ENCODE measurements at regions of chr19 and their contacts with region 1.

Region 1: DNA sequence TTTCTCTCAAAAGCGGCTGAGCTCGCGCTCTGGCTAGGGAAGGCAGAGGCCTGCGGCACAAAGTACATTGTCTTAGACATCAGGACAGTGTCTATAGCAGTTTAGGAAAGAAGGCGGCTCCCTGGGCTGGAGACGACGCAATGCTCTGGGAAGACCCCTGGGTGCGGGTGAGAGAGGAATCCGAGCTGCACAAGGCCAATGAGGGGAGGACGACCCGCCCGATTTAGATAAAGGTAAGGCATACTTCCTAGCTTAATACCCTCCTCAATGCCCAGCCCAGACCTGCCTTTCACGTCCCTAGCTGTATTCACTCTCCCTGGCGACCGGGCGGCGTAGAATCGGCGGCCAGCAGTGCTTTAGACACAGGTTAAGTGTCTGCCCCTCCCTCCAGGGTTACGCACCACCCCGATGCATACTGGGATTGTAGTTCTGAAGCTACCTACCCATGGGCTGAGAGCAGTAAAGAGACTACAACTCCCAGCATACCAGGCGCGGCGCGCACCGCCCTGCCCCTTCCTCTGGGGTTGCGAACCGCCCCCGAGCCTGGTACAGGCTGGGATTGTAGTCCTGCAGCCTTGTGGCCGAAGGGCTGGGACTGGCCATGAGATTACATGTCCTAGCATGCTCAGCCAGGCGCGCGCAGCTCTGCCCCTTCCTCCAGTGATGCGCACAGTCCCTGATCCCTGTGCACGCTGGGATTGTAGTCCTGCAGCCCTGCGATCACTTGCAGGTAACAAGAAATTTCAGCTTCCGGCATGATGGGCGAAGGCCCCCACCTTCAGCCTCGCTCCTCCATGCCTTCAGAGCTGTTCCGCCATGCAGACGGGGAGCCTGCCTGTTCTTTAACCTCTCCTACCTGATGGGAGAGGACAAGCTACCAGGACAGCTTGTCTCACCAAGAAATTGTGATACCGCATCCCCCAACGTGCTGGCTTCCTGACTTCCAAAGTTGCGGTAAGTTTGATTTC is 43.4 kb upstream of the ZNF14 start:
- DNase-seq: peak; percentile 84
- ATAC-seq: peak; percentile 99
- H3K4me3 Mint-ChIP-seq: peak overlapping the region; percentile 97
- H3K27ac Mint-ChIP-seq: peak overlapping the region; percentile 88
- H3K4me1 Mint-ChIP-seq: peaks cover 45% of the 10 kb centered on the region
- H3K27me3 Mint-ChIP-seq: no peaks in the 10 kb centered on the region
- CTCF ChIP-seq: no peak

Region 2: GRCh38 chr19:19597809-19598306 is 178.5 kb before region 1 on chr19:
- CTCF ChIA-PET with region 1: no interaction called
- POLR2A ChIA-PET with region 1: interaction called, 11 read pairs
- intact Hi-C with region 1: no loop called
- DNase-seq: no peak
- ATAC-seq: peak; percentile 80
- H3K4me3 Mint-ChIP-seq: peak overlapping the region; percentile 62
- H3K27ac Mint-ChIP-seq: peak overlapping the region; percentile 89
- H3K4me1 Mint-ChIP-seq: peaks cover 67% of the 10 kb centered on the region
- H3K27me3 Mint-ChIP-seq: no peaks in the 10 kb centered on the region
- CTCF ChIP-seq: no peak

Region 3: DNA sequence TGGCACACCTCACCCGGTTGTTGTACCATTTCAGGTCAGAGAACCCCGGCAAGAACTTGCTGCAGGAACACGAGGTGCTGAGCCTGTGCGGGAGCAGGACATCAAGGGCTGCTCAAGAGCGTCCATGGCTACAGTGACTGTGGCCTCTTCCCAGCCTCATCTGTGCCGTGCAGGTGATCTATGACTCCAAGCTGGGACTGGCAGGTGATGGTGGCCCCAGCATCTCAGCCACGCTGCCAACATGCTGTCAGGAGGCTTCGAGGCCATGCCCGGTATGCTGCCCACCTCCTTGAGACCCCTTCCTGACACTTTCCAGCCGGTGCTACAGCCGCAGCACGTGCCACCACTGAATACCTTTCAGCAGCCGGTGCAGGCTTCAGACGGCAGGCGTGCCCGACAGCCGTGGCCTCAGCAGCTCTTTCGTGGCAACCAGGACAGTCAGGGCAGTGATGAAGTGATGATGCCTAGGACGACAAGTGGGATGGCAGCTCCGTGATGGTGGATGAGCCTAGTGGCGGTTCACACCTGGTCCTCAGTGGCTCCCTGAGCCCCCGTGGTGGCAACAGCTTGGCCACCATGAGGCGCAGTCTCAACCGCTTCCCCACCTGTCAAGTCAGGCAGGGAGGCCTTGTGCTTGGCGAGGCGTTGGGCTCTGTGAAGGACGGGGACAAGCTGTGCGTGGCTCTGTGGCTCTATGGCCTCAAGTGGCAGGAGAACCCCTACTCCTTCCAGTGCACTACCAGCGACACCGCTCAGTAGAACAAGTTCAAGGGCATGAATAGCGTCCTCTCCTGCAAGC is 25.5 kb before region 1 on chr19:
- CTCF ChIA-PET with region 1: no interaction called
- POLR2A ChIA-PET with region 1: no interaction called
- intact Hi-C with region 1: no loop called
- DNase-seq: no peak
- ATAC-seq: no peak
- H3K4me3 Mint-ChIP-seq: no peak overlapping the region
- H3K27ac Mint-ChIP-seq: no peak overlapping the region
- H3K4me1 Mint-ChIP-seq: no peaks in the 10 kb centered on the region
- H3K27me3 Mint-ChIP-seq: no peaks in the 10 kb centered on the region
- CTCF ChIP-seq: no peak

Region 4: GRCh38 chr19:19821366-19821951 is 45.1 kb after region 1 on chr19 and contains the start of gene ZNF506:
- CTCF ChIA-PET with region 1: no interaction called
- POLR2A ChIA-PET with region 1: interaction called, 45 read pairs
- intact Hi-C with region 1: loop called (anchors 1 kb)
- DNase-seq: peak; percentile 85
- ATAC-seq: peak; percentile 87
- H3K4me3 Mint-ChIP-seq: peak within 1 kb of the TSS; percentile 98
- H3K27ac Mint-ChIP-seq: peak within 1 kb of the TSS; percentile 99
- H3K4me1 Mint-ChIP-seq: peaks cover 65% of the 10 kb centered on the region
- H3K27me3 Mint-ChIP-seq: no peaks in the 10 kb centered on the region
- CTCF ChIP-seq: no peak
- total RNA-seq, gene ZNF506: 67.1 and 78.6 TPM in 2 replicates

Region 5: DNA sequence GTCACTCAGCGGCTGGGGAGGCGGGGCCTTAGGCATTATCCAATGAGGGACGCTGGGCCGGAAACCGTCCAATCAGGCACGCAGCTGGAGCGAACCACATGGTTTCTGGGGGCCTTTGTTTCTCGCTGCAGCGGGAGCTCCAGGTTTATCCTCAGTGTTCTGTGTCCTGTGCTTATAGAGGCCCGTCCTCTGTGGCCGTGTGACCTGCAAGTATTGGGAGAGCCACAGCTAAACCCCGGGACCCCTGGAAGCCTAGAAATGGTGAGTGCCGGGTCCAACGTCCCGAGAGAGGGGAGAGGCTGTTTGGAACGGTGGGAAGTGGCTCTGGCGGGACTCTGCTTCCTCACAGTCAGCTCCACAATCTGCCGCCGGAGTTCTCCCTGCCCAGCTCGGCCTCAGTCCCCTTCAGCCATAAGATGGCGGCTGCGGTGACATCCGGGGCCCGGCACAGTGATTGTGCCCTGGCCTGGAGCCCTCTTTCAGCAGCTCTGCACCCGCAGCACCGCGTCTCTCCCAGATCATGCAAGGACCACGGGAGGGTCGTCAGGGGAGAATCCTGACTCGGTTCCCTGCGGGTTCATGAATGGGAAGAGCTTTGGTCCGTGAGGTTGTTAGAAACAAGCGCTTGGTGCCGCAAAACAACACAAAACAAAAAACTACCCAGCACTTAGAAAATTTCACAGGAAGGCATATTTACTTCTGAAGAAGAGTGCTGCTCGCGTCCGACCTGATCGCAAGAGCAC is 89.6 kb after region 1 on chr19 and contains the start of gene ZNF253:
- CTCF ChIA-PET with region 1: interaction called, 3 read pairs
- POLR2A ChIA-PET with region 1: interaction called, 19 read pairs
- intact Hi-C with region 1: loop called (anchors 1 kb)
- DNase-seq: peak; percentile 82
- ATAC-seq: peak; percentile 90
- H3K4me3 Mint-ChIP-seq: peak within 1 kb of the TSS; percentile 100
- H3K27ac Mint-ChIP-seq: peak within 1 kb of the TSS; percentile 99
- H3K4me1 Mint-ChIP-seq: peaks cover 34% of the 10 kb centered on the region
- H3K27me3 Mint-ChIP-seq: no peaks in the 10 kb centered on the region
- CTCF ChIP-seq: no peak
- total RNA-seq, gene ZNF253: 24.7 and 26.3 TPM in 2 replicates

Region 6: GRCh38 chr19:20077791-20078463 is 301.6 kb after region 1 on chr19 and contains the start of gene ZNF90:
- CTCF ChIA-PET with region 1: no interaction called
- POLR2A ChIA-PET with region 1: no interaction called
- intact Hi-C with region 1: loop called (anchors 2 kb)
- DNase-seq: peak; percentile 73
- ATAC-seq: peak; percentile 99
- H3K4me3 Mint-ChIP-seq: peak within 1 kb of the TSS; percentile 96
- H3K27ac Mint-ChIP-seq: peak within 1 kb of the TSS; percentile 69
- H3K4me1 Mint-ChIP-seq: peaks cover 18% of the 10 kb centered on the region
- H3K27me3 Mint-ChIP-seq: no peaks in the 10 kb centered on the region
- CTCF ChIP-seq: no peak
- total RNA-seq, gene ZNF90: 9.8 and 12.5 TPM in 2 replicates

Region 7: GRCh38 chr19:20616071-20616470 is 839.7 kb after region 1 on chr19:
- CTCF ChIA-PET with region 1: no interaction called
- POLR2A ChIA-PET with region 1: no interaction called
- intact Hi-C with region 1: no loop called
- DNase-seq: no peak
- ATAC-seq: no peak
- H3K4me3 Mint-ChIP-seq: no peak overlapping the region
- H3K27ac Mint-ChIP-seq: no peak overlapping the region
- H3K4me1 Mint-ChIP-seq: peaks cover 1% of the 10 kb centered on the region
- H3K27me3 Mint-ChIP-seq: no peaks in the 10 kb centered on the region
- CTCF ChIP-seq: no peak